Mammary epithelial cell (primary cell): ENCODE measurements at regions of chr17 and their contacts with region 1.

Region 1: GRCh38 chr17:42067351-42068091 is 17.1 kb upstream of the C17orf113 start:
- DNase-seq: no peak
- H3K4me3 ChIP-seq: no peak overlapping the region
- H3K27ac ChIP-seq: no peak overlapping the region
- H3K4me1 ChIP-seq: peaks cover 4% of the 10 kb centered on the region
- H3K27me3 ChIP-seq: peaks cover 7% of the 10 kb centered on the region
- CTCF ChIP-seq: peak; percentile 88 to 93

Region 2: GRCh38 chr17:42010898-42011516 is 56.5 kb before region 1 on chr17:
- CTCF ChIA-PET with region 1: no interaction called
- dilution Hi-C with region 1: no loop called
- in situ Hi-C with region 1: no loop called
- intact Hi-C with region 1: no loop called
- DNase-seq: peak; percentile 25
- H3K4me3 ChIP-seq: no peak overlapping the region
- H3K27ac ChIP-seq: peak overlapping the region; percentile 38
- H3K4me1 ChIP-seq: peaks cover 27% of the 10 kb centered on the region
- H3K27me3 ChIP-seq: no peaks in the 10 kb centered on the region
- CTCF ChIP-seq: no peak

Region 3: DNA sequence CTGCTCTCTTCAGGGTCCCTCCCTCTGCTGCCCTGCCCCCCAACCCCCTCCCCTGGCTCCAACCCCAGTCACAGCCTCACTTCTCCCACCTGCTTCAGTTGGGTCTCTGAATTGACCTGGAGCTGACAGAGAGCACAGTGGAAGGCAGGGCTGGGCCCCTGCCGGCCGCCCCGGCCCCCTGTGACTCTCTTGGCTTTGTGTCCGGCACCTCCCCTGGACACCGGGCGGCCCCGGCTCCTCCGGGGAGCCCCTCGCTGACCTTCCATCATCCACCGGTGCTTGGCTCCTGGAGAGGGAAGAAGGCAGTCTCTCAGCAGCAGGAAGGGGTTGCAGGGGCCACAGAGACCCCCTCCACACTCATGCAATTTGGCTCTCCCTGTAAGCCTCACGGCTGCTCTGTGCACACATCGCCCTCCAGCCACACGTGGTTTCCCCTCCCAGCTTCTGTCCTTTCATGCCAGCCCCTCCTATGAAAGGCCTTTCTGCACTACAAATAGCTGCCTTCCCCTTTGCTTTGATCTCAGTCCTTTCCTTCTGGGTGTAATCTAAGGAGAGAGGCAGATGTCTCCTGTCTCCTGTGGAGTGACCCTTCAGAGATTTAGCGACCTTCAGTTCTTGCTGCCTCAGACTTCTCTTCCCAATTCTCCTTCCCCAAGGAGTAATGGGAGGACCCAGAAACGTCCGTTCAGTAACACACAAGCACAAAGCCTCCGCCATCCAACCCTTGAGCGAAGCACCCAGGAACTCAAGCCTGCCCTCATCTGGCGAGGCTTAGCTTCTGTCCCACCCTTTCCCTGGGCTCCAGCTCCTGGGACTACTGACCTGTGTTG is 39.3 kb before region 1 on chr17:
- CTCF ChIA-PET with region 1: no interaction called
- dilution Hi-C with region 1: no loop called
- in situ Hi-C with region 1: no loop called
- intact Hi-C with region 1: loop called (anchors 1 kb)
- DNase-seq: no peak
- H3K4me3 ChIP-seq: no peak overlapping the region
- H3K27ac ChIP-seq: no peak overlapping the region
- H3K4me1 ChIP-seq: peaks cover 12% of the 10 kb centered on the region
- H3K27me3 ChIP-seq: no peaks in the 10 kb centered on the region
- CTCF ChIP-seq: no peak

Region 4: GRCh38 chr17:42107597-42108576 is 40.4 kb after region 1 on chr17:
- CTCF ChIA-PET with region 1: no interaction called
- dilution Hi-C with region 1: no loop called
- in situ Hi-C with region 1: no loop called
- intact Hi-C with region 1: no loop called
- DNase-seq: peak; percentile 50
- H3K4me3 ChIP-seq: peak overlapping the region in 1 of 3 experiments; percentile 10
- H3K27ac ChIP-seq: no peak overlapping the region
- H3K4me1 ChIP-seq: peaks cover 15% of the 10 kb centered on the region
- H3K27me3 ChIP-seq: no peaks in the 10 kb centered on the region
- CTCF ChIP-seq: no peak

Region 5: GRCh38 chr17:42171831-42172230 is 104.3 kb after region 1 on chr17:
- CTCF ChIA-PET with region 1: no interaction called
- dilution Hi-C with region 1: no loop called
- in situ Hi-C with region 1: no loop called
- intact Hi-C with region 1: no loop called
- DNase-seq: peak; percentile 59
- H3K4me3 ChIP-seq: no peak overlapping the region
- H3K27ac ChIP-seq: no peak overlapping the region
- H3K4me1 ChIP-seq: peaks cover 5% of the 10 kb centered on the region
- H3K27me3 ChIP-seq: peaks cover 5% of the 10 kb centered on the region
- CTCF ChIP-seq: peak in 1 of 2 donors; percentile 25